Esophagus squamous epithelium (tissue), 5 donors: ENCODE measurements at regions of chr20 and their contacts with region 1.

Region 1: DNA sequence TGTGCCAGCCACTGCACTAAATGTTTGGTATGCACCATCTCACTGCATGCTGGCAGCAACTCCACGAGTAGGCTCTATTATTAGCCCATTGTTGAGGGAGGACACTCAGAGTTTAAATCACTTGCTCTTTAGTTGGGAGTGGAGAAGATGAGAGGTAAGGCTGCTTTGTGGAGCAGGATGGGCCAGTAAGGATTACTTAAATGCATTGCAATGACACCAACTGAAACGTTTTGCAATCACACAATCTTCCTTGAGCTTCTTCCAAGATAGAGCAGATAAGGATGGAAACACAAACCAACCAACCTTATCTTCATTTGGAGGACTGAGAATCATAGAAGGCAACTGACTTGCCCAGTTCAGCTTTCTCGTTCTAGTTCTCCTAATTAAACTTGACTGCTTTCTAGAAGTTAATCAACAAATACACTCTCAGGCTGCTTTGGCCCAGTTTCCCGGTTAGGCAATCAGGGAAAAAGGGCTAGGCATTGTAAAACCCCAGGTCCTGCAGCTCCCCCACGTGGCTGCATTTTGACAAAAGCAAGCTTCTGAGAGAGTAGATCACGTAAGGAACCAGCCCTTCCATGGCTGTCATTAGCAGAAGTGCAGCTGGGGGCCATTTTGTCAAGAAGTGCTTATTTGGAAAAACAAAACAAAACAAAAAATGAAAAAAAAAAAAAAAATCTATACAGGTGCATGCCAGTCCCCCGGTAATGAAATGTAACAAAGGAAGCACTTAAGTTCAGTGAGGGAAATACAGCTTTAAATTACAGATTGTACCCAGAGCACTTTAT is 130.6 kb downstream of the BCAS1 start:
- DNase-seq: peak; percentile 53
- H3K4me3 ChIP-seq: no peak overlapping the region
- H3K27ac ChIP-seq: peak overlapping the region; percentile 72 to 81 (median 80)
- H3K4me1 ChIP-seq: peaks cover 14 to 48% (median 21%) of the 10 kb centered on the region in 3 donors
- H3K27me3 ChIP-seq: no peaks in the 10 kb centered on the region
- CTCF ChIP-seq: peak; percentile 58 to 91 (median 84)
- POLR2A ChIP-seq: no peak

Region 2: GRCh38 chr20:53643031-53643832 is 296.5 kb before region 1 on chr20:
- intact Hi-C with region 1: loop called (anchors 10 kb)
- DNase-seq: no peak
- H3K4me3 ChIP-seq: peak overlapping the region in 1 of 4 donors; percentile 34
- H3K27ac ChIP-seq: peak overlapping the region; percentile 72 to 89 (median 86)
- H3K4me1 ChIP-seq: peaks cover 12 to 25% (median 14%) of the 10 kb centered on the region in 3 donors
- H3K27me3 ChIP-seq: no peaks in the 10 kb centered on the region
- CTCF ChIP-seq: no peak
- POLR2A ChIP-seq: peak in 2 of 4 donors; percentile 22 to 40